ENCODE measurements at regions of chr12 and their contacts with region 1.

Region 1: DNA sequence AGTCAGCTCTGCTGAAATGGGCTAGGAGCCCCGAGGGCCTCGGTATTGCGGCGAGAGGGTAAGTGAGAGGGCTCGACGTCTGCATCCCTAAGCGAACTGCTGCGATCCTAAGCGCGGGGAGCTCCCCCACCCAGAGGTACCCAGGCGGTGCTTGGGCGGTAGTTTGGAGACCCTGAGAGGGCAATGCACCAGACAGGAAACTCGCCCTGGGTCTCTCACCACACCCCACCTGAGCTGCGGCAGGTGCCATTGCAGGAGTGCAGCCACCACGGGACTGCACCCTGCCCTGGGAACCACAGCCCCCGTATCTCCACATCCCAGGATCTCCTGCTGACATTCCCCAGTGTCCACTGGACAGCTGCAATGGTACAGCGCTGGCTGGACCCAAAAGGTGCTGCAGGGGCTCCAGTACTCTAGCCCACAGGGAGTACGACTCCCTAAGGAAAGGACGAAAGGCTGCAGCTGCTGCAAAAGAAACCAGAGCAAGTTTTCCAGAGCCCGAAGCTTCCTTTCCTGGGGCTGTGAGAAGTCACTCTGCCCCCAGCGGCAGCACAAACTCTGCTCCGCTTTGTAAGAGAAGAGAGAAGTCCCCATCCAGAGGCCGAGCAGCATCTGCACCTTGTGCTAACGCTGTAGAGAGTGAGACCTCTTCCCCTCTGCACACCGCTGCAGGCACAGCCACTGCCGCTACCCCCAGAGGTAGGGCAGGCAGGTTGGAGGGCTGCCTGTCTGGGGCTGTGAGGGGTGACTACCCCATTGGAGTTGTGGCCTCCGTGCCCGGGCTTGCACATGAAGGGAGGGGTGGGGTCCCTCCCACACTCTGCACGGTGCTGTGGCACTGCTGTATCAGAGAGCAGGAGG is 31.1 kb upstream of the MON2 start:
- DNase-seq: no peak
- H3K4me3 ChIP-seq: peak overlapping the region; percentile 45
- H3K27me3 ChIP-seq: peaks cover 9% of the 10 kb centered on the region; the same call in 1 of the 2 replicates
- CTCF ChIP-seq: peak; percentile 77

Region 2: DNA sequence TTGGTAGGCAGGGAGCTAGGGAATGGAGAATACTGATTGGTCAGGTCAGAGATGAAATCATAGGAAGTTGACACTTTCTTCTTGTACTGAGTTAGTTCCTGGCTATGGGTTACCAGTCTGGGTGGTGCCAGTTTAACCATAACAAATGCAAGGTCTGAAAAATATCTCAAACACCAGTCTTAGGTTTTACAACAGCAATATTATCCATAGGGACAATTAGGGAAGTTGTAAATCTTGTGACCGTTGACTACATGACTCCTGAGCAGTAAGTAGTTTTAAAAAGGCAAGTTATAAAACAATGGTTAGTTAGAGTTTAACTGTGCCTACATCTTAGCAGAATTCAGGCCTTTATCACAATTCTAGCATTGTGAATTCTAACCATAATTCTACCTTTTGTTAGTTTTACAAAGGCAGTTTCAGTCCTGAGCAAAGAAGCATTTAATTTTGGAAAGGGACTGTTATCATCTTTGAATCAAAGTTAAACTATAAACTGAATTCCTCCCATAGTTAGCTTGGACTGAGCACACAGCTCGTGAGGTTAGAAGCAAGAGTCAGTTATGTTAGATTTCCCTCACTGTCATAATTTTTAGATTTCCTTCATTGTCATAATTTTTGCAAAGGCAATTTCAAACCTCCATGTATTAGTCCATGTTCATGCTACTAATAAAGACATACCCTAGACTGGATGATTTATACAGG is 11.4 kb after region 1 on chr12:
- CTCF ChIA-PET with region 1: interaction called, 20 read pairs
- POLR2A ChIA-PET with region 1: no interaction called
- DNase-seq: no peak
- H3K4me3 ChIP-seq: no peak overlapping the region
- H3K27me3 ChIP-seq: peaks cover 2% of the 10 kb centered on the region; the same call in 1 of the 2 replicates
- CTCF ChIP-seq: no peak

Region 3: DNA sequence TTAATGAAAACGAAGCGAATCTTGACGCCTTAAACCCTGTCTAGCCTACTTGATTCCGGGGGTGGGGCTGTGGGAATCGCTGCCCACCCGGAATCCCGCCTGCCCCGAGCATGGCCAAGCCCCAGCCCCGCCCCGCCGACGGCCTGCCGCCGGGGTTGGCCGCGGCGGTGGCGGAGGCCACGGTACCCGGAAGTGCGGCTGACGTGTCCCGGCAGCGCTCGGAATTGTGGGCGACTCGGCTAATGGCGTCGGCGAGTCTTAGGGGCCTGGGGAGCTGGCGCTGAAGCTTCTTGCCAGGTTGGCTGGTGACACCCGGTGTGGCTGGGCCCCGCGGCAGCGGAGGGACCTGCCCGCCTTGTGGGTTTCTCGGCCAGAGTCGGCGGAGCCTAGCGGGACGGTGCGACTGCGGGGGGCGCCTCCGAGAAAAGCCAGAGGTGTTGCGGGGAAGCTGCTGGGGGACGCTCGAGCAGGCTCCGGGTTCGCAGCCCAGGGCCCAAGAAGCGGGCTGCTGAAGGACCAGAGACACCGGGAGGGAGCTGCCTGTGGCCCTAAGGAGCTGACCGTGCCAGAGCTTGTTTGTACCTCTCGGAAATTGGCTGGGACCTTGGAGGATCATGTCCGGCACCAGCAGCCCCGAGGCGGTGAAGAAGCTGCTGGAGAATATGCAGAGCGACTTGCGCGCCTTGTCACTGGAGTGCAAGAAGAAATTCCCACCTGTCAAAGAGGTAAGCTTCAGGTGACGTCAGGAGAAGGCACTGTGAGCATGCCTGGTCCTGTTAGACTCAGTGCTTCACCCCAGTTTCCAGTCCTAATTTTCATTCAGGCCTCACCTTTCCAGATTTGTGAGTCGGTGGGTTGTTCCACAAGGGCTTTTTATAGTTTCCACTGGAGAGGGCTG is 31.3 kb after region 1 on chr12 and contains the start of gene MON2:
- CTCF ChIA-PET with region 1: interaction called, 30 read pairs
- POLR2A ChIA-PET with region 1: no interaction called
- DNase-seq: peak; percentile 20
- H3K4me3 ChIP-seq: peak within 1 kb of the TSS; percentile 84
- H3K27me3 ChIP-seq: no peaks in the 10 kb centered on the region
- CTCF ChIP-seq: peak; percentile 10; the same call in 1 of the 2 replicates
- polyA plus RNA-seq, gene MON2: 7.8 and 14.8 TPM in 2 replicates

Region 4: DNA sequence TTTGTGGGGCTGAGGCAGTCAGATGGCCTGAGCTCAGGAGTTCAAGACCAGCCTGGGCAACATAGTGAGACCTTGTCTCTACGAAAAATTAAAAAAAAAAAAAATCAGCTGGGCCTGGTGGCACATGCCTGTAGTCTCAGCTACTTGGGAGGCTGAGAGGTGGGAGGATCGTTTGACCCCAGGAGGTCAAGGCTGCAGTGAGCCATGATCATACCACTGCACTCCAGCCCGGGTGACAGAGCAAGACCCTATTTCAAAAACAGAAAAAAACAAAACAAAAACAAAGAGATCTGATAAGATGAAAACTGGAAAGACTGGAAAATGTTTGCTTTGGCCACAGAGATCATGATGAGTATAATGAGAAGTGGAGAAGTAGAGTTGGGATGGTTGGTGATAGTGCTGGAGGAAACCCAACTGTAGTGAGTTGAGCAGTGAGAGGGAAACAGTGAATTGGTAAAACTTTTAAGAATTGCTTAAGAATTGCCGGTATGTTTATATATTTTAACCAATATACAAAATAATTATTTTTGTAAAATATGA is 70.2 kb after region 1 on chr12:
- CTCF ChIA-PET with region 1: no interaction called
- POLR2A ChIA-PET with region 1: no interaction called
- DNase-seq: no peak
- H3K4me3 ChIP-seq: no peak overlapping the region
- H3K27me3 ChIP-seq: no peaks in the 10 kb centered on the region
- CTCF ChIP-seq: no peak

Region 5: DNA sequence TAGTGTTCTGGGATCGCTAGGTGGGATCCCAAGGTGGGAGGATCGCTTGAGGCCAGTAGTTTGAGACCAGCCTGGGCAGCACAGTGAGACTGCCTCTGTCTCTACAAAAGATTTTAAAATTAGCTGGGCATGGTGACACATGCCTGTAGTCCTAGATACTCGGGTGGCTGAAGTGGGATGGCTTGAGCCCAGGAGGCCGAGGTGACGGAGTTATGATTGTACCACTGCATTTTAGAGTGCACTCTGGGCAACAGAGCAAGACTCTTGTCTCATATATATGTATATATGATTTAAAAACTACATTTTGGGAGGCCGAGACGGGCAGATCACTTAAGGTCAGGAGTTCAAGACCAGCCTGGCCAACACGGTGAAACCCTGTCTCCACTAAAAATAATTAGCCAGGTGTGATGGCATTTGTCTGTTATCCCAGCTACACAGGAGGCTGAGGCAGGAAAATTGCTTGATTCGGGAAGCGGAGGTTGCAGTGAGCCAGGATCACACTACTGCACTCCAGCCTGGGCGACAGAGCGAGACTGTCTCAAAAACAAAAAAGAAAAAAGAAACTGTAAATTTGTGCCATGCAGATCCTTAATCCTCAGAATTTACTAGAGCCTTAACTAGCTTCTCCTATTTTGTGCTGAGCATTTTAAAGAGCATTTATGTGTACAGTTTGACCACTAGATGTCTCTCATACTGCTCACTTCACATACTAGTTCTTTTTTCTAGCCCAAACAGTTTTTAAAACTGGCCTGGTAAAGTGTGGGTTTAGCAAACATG is 145.9 kb after region 1 on chr12:
- CTCF ChIA-PET with region 1: interaction called, 12 read pairs
- POLR2A ChIA-PET with region 1: interaction called, 5 read pairs
- DNase-seq: no peak
- H3K4me3 ChIP-seq: no peak overlapping the region
- H3K27me3 ChIP-seq: no peaks in the 10 kb centered on the region
- CTCF ChIP-seq: peak; percentile 66

Region 6: DNA sequence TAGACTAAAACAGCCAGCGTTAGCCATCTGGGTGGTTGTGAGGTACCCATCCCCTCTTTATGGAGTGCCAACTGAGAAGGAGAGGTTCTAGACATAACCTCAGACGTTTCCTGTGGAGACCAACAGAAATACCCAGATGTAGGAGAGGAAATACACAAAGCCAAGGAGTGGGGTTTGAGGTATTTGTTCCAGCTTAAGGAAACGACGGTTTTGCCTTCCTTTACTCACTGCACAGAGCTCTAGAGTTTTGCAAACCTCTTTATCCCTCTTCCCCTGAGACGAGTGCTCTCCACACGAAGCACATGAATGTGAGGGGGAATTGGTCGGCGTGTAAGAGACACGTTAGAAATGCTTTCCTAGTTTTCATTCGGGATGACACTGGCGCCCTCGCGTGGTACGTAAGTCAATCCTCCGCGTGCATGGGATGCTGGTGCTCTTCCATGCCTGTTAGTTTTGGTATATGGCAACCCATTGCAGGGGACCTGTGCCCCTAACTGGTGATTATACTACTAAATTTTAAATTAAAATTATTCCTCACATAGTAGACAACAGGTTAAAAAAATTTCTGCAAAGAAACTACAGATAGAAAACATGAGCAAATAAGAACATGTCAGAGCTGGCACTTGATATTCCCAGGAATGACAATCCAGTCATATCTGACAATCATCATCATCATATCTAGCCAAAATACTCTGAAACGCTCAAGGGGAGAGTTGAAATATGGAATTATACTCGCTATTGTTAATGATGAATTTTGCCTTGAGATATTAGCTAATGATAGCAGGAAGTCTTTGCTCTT is 377.7 kb after region 1 on chr12:
- CTCF ChIA-PET with region 1: interaction called, 23 read pairs
- POLR2A ChIA-PET with region 1: no interaction called
- DNase-seq: no peak
- H3K4me3 ChIP-seq: no peak overlapping the region
- H3K27me3 ChIP-seq: no peaks in the 10 kb centered on the region
- CTCF ChIP-seq: peak; percentile 88

Region 7: GRCh38 chr12:63047120-63047519 is 611.6 kb after region 1 on chr12:
- CTCF ChIA-PET with region 1: no interaction called
- POLR2A ChIA-PET with region 1: no interaction called
- DNase-seq: no peak
- H3K4me3 ChIP-seq: no peak overlapping the region
- H3K27me3 ChIP-seq: no peaks in the 10 kb centered on the region
- CTCF ChIP-seq: no peak

Region 8: DNA sequence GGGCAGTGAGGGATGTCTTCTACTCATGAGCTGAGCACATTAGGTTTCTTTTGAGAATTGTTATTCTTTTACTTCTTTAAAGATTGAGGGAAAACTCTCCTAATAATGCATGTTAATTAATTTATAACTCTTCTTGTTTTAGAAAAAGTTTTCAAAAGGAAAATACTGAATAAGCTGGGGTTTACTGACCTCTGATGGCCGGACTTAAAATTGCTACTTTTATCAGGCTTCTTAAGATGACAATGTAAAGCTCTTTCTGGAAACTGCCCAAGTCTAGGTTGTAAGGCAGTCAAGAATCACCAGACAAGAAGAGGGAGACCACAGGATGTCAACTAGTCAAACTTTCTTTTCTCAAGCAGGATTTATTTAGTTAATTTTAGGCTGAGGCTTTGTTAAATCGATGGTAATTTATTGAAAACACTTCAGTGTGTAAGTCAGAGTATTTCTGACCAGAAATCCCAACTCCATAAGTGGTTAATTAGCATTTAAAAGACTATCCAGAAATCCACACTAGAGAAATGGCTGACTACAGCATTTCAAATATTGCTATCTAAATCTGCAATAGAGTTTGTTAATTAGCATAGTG is 633.4 kb after region 1 on chr12:
- CTCF ChIA-PET with region 1: interaction called, 28 read pairs
- POLR2A ChIA-PET with region 1: no interaction called
- DNase-seq: no peak
- H3K4me3 ChIP-seq: no peak overlapping the region
- H3K27me3 ChIP-seq: no peaks in the 10 kb centered on the region
- CTCF ChIP-seq: peak; percentile 66

Measured in BJ (cell line).